ENCODE measurements at regions of chr12 and their contacts with region 1.

Region 1: DNA sequence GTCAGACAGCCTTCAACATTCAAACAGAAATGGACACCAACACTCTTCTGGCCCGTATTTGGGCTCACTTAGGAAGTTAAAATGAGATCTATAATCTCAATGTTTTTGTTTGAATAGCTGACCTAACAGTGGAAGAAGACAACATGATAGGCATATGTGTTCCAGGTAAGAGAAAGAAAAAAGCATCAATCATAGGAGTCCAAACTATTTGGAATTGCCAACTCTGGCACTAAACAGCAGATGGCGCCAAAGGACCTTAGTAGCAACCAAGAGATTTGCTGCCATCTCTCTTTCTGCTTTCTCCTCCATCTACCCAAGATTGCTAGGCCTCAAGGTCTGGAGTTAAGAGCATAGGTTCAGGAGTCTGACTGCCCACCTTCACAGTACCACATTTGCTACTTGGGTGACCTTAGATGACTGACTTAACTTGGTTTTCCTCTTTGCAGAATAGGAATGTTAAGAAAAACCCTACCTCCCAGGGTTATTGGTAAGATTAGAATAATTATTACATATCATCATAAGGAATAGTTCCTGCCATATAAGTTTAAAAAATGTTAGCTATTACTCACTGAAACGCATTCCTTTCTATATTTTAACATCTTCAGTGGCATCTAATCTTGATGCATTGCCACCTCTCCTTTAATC is 30.2 kb downstream of the PEX5 start:
- DNase-seq: peak; percentile 52
- H3K4me3 ChIP-seq: no peak overlapping the region; a peak in 1 of 4 replicates
- H3K27ac ChIP-seq: no peak overlapping the region
- H3K4me1 ChIP-seq: no peaks in the 10 kb centered on the region
- H3K27me3 ChIP-seq: peaks cover 10% of the 10 kb centered on the region; the same call in 1 of the 2 replicates
- CTCF ChIP-seq: peak; percentile 89
- EP300 ChIP-seq: no peak
- RAD21 ChIP-seq: peak; percentile 95

Region 2: GRCh38 chr12:7460375-7461259 is 240.9 kb after region 1 on chr12:
- CTCF ChIA-PET with region 1: interaction called, 17 read pairs
- POLR2A ChIA-PET with region 1: no interaction called
- DNase-seq: peak; percentile 34
- H3K4me3 ChIP-seq: no peak overlapping the region
- H3K27ac ChIP-seq: no peak overlapping the region
- H3K4me1 ChIP-seq: no peaks in the 10 kb centered on the region
- H3K27me3 ChIP-seq: peaks cover 13% of the 10 kb centered on the region
- CTCF ChIP-seq: peak; percentile 87
- EP300 ChIP-seq: no peak
- RAD21 ChIP-seq: peak; percentile 82

Region 3: DNA sequence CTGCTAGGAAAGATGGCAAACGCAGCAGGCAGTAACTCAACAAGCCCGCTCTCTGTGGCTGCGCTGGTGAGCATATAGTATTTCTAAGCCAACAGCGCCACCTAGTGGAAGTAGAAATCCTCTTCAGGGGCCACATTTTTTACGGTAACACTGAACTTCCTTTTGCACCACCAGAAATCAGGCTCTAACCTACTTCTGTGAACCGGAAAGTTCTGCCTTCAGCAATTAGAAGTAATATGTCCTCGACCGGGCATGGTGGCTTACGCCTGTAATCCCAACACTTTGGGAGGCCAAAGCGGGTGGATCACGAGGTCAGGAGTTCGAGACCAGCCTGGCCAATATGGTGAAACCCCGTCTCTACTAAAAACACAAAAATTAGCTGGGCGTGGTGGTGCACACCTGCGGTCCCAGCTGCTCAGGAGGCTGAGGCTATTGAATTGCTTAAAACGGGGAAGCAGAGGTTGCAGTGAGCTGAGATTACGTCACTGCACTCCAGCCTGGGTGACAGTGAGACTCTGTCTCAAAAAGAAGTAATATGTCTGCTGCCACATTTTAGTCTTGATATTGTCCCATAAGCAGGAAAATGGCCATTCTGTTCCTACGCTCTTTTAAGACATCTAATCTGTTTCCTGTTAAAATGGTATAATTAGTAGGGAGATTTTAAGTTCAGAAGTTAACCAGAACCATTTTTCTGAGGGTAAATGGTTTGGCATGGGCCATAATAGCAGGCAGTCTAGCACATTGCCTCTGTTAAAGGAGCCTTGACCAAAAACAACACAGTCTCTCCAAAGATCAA is 419.2 kb after region 1 on chr12:
- CTCF ChIA-PET with region 1: interaction called, 16 read pairs
- POLR2A ChIA-PET with region 1: no interaction called
- DNase-seq: peak; percentile 77
- H3K4me3 ChIP-seq: peak overlapping the region in 1 of 2 experiments; percentile 32; a peak in 1 of 4 replicates
- H3K27ac ChIP-seq: no peak overlapping the region
- H3K4me1 ChIP-seq: no peaks in the 10 kb centered on the region; a peak in 1 of 4 replicates
- H3K27me3 ChIP-seq: peaks cover 56% of the 10 kb centered on the region
- CTCF ChIP-seq: peak; percentile 85
- EP300 ChIP-seq: no peak
- RAD21 ChIP-seq: peak; percentile 96